PC-9 (cell line): ENCODE measurements at regions of chr9 and their contacts with region 1.

Region 1: GRCh38 chr9:12884737-12885414 is 110.1 kb downstream of the LURAP1L start:
- DNase-seq: peak in 1 of 2 experiments; percentile 34
- H3K4me3 ChIP-seq: no peak overlapping the region
- H3K27ac ChIP-seq: no peak overlapping the region
- H3K4me1 ChIP-seq: no peaks in the 10 kb centered on the region
- H3K27me3 ChIP-seq: no peaks in the 10 kb centered on the region
- CTCF ChIP-seq: peak; percentile 49

Region 2: GRCh38 chr9:12764150-12764549 is 120.7 kb before region 1 on chr9:
- CTCF ChIA-PET with region 1: no interaction called
- POLR2A ChIA-PET with region 1: no interaction called
- intact Hi-C with region 1: no loop called
- DNase-seq: no peak
- H3K4me3 ChIP-seq: no peak overlapping the region
- H3K27ac ChIP-seq: no peak overlapping the region
- H3K4me1 ChIP-seq: no peaks in the 10 kb centered on the region
- H3K27me3 ChIP-seq: no peaks in the 10 kb centered on the region
- CTCF ChIP-seq: no peak

Region 3: GRCh38 chr9:12775679-12776512 is 109.0 kb before region 1 on chr9:
- CTCF ChIA-PET with region 1: interaction called, 6 read pairs
- POLR2A ChIA-PET with region 1: no interaction called
- intact Hi-C with region 1: loop called (anchors 2 kb)
- DNase-seq: peak; percentile 64 to 65
- H3K4me3 ChIP-seq: peak overlapping the region; percentile 90
- H3K27ac ChIP-seq: peak overlapping the region; percentile 78
- H3K4me1 ChIP-seq: peaks cover 23% of the 10 kb centered on the region
- H3K27me3 ChIP-seq: no peaks in the 10 kb centered on the region
- CTCF ChIP-seq: peak; percentile 48; the same call in 1 of the 2 replicates

Region 4: DNA sequence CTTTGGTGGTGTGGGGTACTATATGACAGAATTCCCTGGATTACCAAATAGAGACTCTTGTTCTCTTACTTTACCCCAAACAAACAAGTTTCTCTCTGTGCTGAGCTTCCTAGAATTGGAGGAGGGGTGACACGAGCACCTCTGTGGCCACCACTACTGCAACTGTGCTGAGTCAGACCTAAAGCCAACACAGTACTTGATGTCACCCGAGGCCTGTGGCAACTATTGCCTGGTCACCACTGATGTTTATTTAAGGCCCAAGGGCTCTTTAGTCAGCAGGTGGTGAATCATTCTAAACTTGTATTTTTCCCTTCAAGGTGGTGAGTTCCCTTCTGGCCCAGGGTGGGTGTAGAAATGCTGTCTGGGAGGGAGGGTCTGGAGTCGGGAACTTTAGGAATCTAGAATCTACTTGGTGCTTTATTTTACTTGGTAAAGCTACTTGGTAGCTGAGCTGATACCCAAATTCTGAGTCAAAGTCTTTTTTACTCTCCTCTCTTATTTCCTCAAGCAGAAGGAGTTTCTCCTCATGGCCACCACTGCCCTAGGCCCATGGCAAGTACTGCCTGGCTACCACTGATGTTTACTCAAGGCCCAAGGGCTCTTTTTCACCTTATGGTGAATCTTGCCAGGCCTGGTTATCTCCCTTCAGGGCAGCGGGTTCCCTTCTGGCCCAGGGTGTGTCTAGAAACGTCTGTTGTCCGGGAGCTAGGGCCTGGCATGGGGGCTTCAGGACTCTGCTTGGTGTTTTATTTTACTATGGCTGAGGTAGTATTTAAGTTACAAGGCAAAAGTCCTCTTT is 100.2 kb before region 1 on chr9:
- CTCF ChIA-PET with region 1: no interaction called
- POLR2A ChIA-PET with region 1: no interaction called
- intact Hi-C with region 1: loop called (anchors 2 kb)
- DNase-seq: peak; percentile 76 to 96
- H3K4me3 ChIP-seq: peak overlapping the region; percentile 29; the same call in 1 of the 2 replicates
- H3K27ac ChIP-seq: peak overlapping the region; percentile 100
- H3K4me1 ChIP-seq: peaks cover 35% of the 10 kb centered on the region
- H3K27me3 ChIP-seq: no peaks in the 10 kb centered on the region
- CTCF ChIP-seq: no peak